K562 (cell line): ENCODE measurements at regions of chr1 and their contacts with region 1.

Region 1: GRCh38 chr1:150532868-150533302 is 16.3 kb upstream of the ADAMTSL4 start:
- DNase-seq: no peak
- ATAC-seq: no peak
- H3K4me3 ChIP-seq: no peak overlapping the region
- H3K27ac ChIP-seq: 0 out of 3 replicates have a peak overlapping the region, but pooled peaks have one; percentile 13
- H3K4me1 ChIP-seq: peaks cover 9 to 19% of the 10 kb centered on the region in 2 experiments; a peak in 4 of 5 replicates
- H3K27me3 ChIP-seq: no peaks in the 10 kb centered on the region
- CTCF ChIP-seq: no peak; a peak in 1 of 6 replicates
- EP300 ChIP-seq: no peak
- POLR2A ChIP-seq: no peak
- RAD21 ChIP-seq: no peak

Region 2: GRCh38 chr1:150464422-150464826 is 68.5 kb before region 1 on chr1:
- CTCF ChIA-PET with region 1: interaction called, 9 read pairs
- POLR2A ChIA-PET with region 1: interaction called, 3 read pairs
- in situ Hi-C with region 1: no loop called
- intact Hi-C with region 1: loop called (anchors 1 kb)
- DNase-seq: peak; percentile 67 to 84 (median 77)
- ATAC-seq: peak; percentile 85
- H3K4me3 ChIP-seq: no peak overlapping the region
- H3K27ac ChIP-seq: no peak overlapping the region
- H3K4me1 ChIP-seq: no peaks in the 10 kb centered on the region
- H3K27me3 ChIP-seq: no peaks in the 10 kb centered on the region
- CTCF ChIP-seq: peak; percentile 75 to 82 (median 81)
- EP300 ChIP-seq: no peak
- POLR2A ChIP-seq: no peak
- RAD21 ChIP-seq: peak; percentile 75 to 81

Region 3: GRCh38 chr1:150486964-150487762 is 45.7 kb before region 1 on chr1 and contains the start of gene TARS2:
- CTCF ChIA-PET with region 1: interaction called, 5 read pairs
- POLR2A ChIA-PET with region 1: no interaction called
- in situ Hi-C with region 1: no loop called
- intact Hi-C with region 1: loop called (anchors 1 kb)
- DNase-seq: peak; percentile 97 to 98 (median 98)
- ATAC-seq: peak; percentile 100
- H3K4me3 ChIP-seq: peak within 1 kb of the TSS; percentile 74
- H3K27ac ChIP-seq: peak within 1 kb of the TSS; percentile 93
- H3K4me1 ChIP-seq: peaks cover 3 to 10% of the 10 kb centered on the region in 2 experiments; a peak in 3 of 5 replicates
- H3K27me3 ChIP-seq: no peaks in the 10 kb centered on the region
- CTCF ChIP-seq: no peak; a peak in 1 of 6 replicates
- EP300 ChIP-seq: peak; percentile 61
- POLR2A ChIP-seq: peak; percentile 95
- RAD21 ChIP-seq: peak in 1 of 2 experiments; percentile 32; a peak in 1 of 4 replicates
- polyA plus RNA-seq, gene TARS2: 17.0 to 30.1 TPM

Region 4: GRCh38 chr1:151372061-151372934 is 839.4 kb after region 1 on chr1 and contains the start of gene SELENBP1:
- CTCF ChIA-PET with region 1: no interaction called
- POLR2A ChIA-PET with region 1: no interaction called
- in situ Hi-C with region 1: no loop called
- intact Hi-C with region 1: no loop called
- DNase-seq: peak; percentile 73 to 84 (median 78)
- ATAC-seq: peak; percentile 86
- H3K4me3 ChIP-seq: peak within 1 kb of the TSS; percentile 49
- H3K27ac ChIP-seq: peak within 1 kb of the TSS; percentile 65
- H3K4me1 ChIP-seq: peaks cover 32 to 48% of the 10 kb centered on the region in 2 experiments
- H3K27me3 ChIP-seq: no peaks in the 10 kb centered on the region
- CTCF ChIP-seq: no peak
- EP300 ChIP-seq: no peak
- POLR2A ChIP-seq: peak; percentile 73
- RAD21 ChIP-seq: no peak
- polyA plus RNA-seq, gene SELENBP1: 52.1 to 81.2 TPM